H1 (cell line): ENCODE measurements at regions of chr16 and their contacts with region 1.

Region 1: DNA sequence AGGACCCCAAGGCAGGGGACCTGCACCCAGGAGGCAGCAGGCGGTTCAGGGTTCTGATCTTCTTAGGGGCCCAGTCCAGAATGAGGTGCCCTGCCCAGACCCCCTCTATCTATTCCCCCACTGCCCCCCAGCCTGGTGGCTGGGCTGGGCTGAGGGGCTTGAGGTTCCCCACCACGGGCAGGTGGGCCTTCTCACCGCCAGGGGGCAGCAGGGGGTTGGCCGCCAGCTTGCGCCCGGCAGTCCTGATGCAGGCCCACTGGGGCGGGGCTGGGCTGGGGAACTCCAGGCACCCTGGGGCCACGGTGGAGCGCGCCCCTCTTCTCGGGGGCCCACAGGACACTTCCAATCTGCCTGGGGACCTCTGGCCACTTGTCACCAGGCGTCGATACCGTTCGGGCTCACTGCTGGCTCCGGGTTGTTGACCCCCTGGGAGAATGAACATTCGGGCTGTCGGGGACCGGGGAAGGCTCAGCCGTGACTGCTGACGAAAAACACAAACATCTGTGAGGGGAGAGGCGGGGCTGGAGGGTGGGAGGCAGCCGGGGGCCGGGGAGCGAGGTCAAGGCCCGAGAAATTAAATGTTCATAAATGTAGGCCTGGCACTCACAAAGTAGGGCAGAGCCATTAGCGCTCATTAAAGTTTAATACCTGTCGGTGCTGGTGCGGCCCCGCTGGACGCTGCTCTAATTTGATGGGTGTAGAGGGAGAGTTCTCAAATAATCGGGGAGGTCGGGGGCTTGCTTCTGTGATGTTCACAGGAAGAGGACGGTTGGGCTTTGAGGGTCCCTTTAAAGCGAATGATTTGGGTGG is 219.2 kb upstream of the GSE1 start:
- DNase-seq: peak in 1 of 2 experiments; percentile 97
- H3K4me3 ChIP-seq: peak overlapping the region in 1 of 4 experiments; percentile 43; a peak in 1 of 8 replicates
- H3K27ac ChIP-seq: no peak overlapping the region
- H3K4me1 ChIP-seq: peaks cover 0 to 31% (median 25%) of the 10 kb centered on the region in 4 experiments; a peak in 6 of 7 replicates
- H3K27me3 ChIP-seq: no peaks in the 10 kb centered on the region
- CTCF ChIP-seq: peak; percentile 85 to 98 (median 94)
- EP300 ChIP-seq: no peak
- POLR2A ChIP-seq: no peak
- RAD21 ChIP-seq: peak; percentile 72 to 81

Region 2: DNA sequence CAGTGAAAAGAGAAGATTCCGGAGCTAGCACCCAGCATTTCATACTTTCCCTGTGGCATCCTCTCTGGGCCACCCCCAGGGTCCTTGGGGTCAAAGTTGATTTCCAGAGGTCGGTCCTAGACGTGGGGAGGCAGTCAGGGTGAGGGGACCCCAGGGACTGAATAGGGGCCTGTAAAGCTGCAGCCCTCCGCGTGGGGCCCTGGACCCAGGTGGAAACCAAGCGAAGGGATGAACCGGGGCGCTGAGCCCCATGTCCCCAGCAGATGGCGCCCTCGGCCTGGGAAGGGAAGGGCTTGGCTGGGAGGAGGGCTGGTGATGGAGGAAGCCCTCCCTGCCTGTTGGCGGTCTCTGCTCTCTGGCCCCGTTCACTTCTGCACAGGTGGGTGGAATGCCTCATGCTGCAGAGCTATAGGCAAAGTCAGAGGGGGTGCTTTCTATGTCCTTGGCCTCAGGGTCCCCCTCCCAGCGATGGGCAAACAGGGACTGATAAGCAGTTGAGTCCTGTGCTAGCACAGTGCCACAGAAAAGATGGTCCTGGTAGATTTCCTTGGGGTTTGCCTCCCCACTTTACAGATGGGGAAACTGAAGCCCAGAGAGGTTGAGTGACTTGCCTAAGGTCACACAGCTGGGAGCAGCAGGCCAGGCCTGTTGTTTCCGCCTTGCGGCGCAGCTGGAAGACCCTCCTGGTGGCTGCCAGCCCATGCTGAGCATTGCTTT is 118.2 kb before region 1 on chr16:
- CTCF ChIA-PET with region 1: no interaction called
- POLR2A ChIA-PET with region 1: no interaction called
- DNase-seq: peak in 1 of 2 experiments; percentile 96
- H3K4me3 ChIP-seq: no peak overlapping the region
- H3K27ac ChIP-seq: no peak overlapping the region
- H3K4me1 ChIP-seq: peaks cover 0 to 15% (median 4%) of the 10 kb centered on the region in 4 experiments; a peak in 4 of 7 replicates
- H3K27me3 ChIP-seq: peaks cover 0 to under 1% (median 0%) of the 10 kb centered on the region in 4 experiments; a peak in 1 of 7 replicates
- CTCF ChIP-seq: peak; percentile 96 to 99 (median 97)
- EP300 ChIP-seq: no peak
- POLR2A ChIP-seq: no peak
- RAD21 ChIP-seq: peak; percentile 91 to 93

Region 3: DNA sequence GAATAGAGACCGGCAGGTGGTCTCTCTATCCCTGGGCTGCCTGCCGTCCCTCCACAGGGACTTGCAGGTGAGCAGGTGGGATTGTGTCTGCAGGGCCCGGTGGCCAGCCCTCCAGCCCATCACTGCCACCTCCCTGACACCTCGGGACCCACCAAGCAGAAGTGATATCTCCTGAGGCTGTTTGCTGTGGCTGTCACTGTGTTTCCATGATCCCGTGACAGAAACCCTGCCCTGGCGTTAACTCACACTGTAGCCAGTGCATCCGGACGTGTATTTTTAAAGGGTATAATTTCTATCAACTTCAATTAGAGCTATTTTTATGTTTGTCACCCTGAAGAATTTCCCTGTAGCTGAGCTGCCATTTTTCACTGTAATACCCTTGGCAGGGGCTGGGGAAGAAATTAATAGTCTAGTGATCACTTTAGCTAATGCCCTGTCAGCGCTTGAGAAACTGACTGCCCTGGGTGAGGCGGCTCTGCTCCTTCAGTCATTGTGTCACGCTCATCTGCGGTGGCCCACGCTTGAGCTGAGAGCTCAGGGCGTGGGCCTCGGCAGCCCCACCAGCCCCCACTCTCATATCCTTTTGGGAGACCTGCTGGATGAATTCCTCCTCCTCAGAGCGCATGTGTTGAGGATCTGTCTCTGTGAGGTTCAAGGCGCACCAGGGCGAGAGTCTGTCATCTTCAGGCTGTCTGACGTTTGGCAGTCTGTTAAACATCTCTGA is 51.7 kb before region 1 on chr16:
- CTCF ChIA-PET with region 1: interaction called, 24 read pairs
- POLR2A ChIA-PET with region 1: no interaction called
- DNase-seq: no peak
- H3K4me3 ChIP-seq: no peak overlapping the region
- H3K27ac ChIP-seq: no peak overlapping the region
- H3K4me1 ChIP-seq: peaks cover 0 to 5% (median 0%) of the 10 kb centered on the region in 4 experiments; a peak in 1 of 7 replicates
- H3K27me3 ChIP-seq: peaks cover 0 to 3% (median under 1%) of the 10 kb centered on the region in 4 experiments; a peak in 2 of 7 replicates
- CTCF ChIP-seq: no peak
- EP300 ChIP-seq: no peak
- POLR2A ChIP-seq: no peak
- RAD21 ChIP-seq: no peak

Region 4: DNA sequence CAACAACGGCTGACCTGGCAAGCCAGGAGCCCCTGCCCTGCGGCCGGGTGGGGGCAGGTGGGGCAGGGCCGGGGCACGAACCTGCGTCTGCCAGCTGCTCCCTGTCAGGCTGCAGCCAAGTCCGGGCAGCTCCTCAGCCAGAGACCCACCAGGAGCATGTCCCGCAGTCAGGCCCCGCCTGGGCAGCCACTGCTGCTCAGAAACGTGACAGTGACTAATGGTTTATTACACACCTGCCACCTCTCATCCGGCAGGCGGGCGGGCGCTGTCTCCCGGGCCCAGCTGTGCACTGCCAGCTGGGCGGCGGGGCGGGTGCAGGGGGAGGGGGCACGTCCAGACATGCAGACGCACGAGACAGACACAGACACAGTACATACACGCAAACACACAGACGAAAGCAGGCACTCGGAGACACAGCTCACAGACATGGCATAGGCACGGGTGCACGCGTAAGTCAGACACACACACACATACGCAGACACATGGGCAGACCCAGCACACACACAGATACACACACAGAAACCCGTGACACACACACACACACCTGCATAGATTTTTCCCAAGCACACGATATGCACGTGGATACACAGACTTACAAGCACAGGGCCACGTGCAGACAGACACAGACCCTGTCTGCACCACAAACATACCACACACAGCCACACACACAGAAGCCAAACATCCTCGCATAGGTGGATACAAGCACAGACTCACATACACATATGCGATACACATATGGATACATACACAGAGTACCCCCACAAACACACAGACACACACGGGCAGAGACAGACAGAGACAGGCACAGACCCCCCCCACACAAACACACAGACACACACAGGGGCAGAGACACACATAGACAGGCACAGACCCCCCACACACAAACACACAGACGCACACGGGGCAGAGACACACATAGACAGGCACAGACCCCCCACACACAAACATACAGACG is 33.3 kb before region 1 on chr16:
- CTCF ChIA-PET with region 1: interaction called, 15 read pairs
- POLR2A ChIA-PET with region 1: no interaction called
- DNase-seq: no peak
- H3K4me3 ChIP-seq: no peak overlapping the region
- H3K27ac ChIP-seq: no peak overlapping the region; the same call in 1 of the 2 replicates
- H3K4me1 ChIP-seq: peaks cover 5 to 9% (median 7%) of the 10 kb centered on the region in 4 experiments
- H3K27me3 ChIP-seq: peaks cover 0 to 6% (median 2%) of the 10 kb centered on the region in 4 experiments; a peak in 3 of 7 replicates
- CTCF ChIP-seq: no peak
- EP300 ChIP-seq: no peak
- POLR2A ChIP-seq: no peak
- RAD21 ChIP-seq: no peak

Region 5: DNA sequence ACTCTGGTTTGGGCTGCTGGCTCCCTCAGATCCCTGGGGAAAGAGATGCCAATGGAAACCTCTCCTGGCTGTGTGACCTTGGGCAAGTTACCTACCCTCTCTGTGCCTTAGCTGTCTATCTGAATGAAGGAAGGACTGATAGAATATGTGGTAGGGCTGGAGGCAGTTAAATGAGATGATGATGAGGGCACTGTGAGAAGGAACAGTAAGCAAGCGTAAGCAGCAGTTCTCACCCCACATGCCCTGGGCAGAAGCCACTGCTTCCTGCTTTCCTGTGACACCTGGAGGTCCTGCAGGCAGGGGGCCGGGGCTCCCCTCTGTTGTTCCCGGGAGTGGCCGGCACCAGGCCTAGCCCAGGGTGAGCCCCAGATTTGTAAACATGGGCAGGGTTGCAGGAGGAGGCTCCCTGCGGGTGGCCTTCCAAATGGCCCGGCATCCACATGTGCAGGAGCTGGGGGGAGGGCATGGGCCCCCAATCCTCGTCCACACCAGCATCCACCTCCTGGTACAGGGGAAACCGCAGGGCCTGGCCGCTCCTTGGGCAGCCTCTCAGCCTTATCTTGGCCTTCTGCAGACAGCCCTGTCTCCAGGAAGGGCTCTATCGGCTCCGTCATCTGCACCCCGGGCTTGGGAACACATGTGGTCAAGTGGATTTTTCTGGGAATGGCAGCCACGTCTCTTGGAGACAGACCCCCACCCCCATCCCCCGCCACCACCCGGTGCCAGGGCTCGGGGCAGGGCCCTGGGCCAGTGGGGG is 16.3 kb before region 1 on chr16:
- CTCF ChIA-PET with region 1: interaction called, 11 read pairs
- POLR2A ChIA-PET with region 1: interaction called, 4 read pairs
- DNase-seq: no peak
- H3K4me3 ChIP-seq: no peak overlapping the region
- H3K27ac ChIP-seq: no peak overlapping the region
- H3K4me1 ChIP-seq: peaks cover 0 to 1% (median 0%) of the 10 kb centered on the region in 4 experiments; a peak in 3 of 7 replicates
- H3K27me3 ChIP-seq: no peaks in the 10 kb centered on the region; a peak in 1 of 7 replicates
- CTCF ChIP-seq: no peak
- EP300 ChIP-seq: no peak
- POLR2A ChIP-seq: no peak
- RAD21 ChIP-seq: no peak